ENCODE measurements at regions of chr4 and their contacts with region 1.

Region 1: GRCh38 chr4:81471588-81472288 is at the start of gene RASGEF1B:
- DNase-seq: peak; percentile 80
- H3K4me3 Mint-ChIP-seq: peak within 1 kb of the TSS; percentile 80
- H3K27ac Mint-ChIP-seq: peak within 1 kb of the TSS; percentile 73
- H3K4me1 Mint-ChIP-seq: peaks cover 27% of the 10 kb centered on the region
- H3K27me3 Mint-ChIP-seq: no peaks in the 10 kb centered on the region
- CTCF ChIP-seq: no peak
- total RNA-seq, gene RASGEF1B: 4.8 and 5.4 TPM in 2 replicates

Region 2: DNA sequence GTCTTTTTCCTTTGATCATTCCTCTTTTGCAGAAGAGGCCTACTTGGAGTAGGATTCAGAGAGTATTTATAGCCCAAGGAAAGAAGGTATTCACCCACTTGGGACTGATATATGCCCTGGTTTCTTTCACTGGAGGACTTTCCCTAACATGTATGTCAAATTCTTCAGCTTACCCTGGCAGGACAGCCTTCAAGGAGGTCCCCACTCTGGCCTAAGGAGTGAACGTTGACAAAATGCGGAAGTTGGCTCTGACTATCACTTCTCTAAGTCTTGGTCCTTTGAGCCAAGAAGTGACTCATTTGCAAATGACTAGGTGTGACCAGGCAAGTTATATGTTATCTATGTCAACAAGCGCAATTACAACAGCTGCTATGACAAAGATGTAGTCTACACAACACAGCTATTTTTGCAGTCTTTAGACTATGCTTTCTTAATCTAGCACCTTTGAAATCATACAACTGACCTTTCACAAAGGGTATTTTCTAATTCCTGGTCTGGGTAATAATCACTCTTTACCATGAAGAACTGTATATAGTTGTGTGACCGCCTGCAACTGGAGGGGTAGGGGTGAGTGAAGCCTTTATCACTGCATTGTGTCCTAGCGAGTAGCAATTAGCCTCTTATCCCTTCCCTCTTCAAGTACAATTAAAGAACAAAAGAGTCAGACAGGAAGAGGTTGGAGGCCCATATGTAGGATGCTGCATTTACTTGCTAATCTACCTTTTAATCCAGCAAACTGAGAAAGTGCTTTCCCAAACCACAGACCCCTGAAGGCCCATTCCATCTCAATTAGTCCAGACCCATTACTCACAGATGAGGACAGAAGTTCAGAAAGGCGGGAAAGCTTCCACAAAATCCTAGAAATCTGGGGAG is 50.2 kb before region 1 on chr4:
- CTCF ChIA-PET with region 1: interaction called, 12 read pairs
- POLR2A ChIA-PET with region 1: interaction called, 11 read pairs
- intact Hi-C with region 1: no loop called
- DNase-seq: peak; percentile 88
- H3K4me3 Mint-ChIP-seq: no peak overlapping the region
- H3K27ac Mint-ChIP-seq: peak overlapping the region; percentile 95
- H3K4me1 Mint-ChIP-seq: peaks cover 22% of the 10 kb centered on the region
- H3K27me3 Mint-ChIP-seq: no peaks in the 10 kb centered on the region
- CTCF ChIP-seq: no peak

Region 3: DNA sequence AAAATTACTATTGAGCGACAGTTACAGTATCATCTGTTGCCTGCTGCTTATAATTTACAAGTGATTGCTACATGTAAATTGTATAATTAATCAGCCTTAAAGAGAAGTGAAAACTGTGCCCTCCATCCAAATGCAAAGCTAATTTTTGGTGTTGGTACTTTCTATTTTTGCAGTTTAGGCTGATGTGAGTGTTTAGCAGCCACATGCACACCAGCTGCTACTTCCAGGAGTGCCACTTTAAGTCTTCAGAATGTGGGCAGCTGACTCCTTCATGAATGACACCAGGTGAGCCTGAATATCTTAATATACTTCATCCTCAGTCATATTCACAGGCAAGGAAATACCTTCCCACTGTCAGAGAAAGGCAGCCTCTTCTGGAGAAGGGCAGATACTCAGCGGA is 149.8 kb after region 1 on chr4:
- CTCF ChIA-PET with region 1: interaction called, 8 read pairs
- POLR2A ChIA-PET with region 1: interaction called, 29 read pairs
- intact Hi-C with region 1: no loop called
- DNase-seq: no peak
- H3K4me3 Mint-ChIP-seq: no peak overlapping the region
- H3K27ac Mint-ChIP-seq: no peak overlapping the region
- H3K4me1 Mint-ChIP-seq: peaks cover 11% of the 10 kb centered on the region
- H3K27me3 Mint-ChIP-seq: no peaks in the 10 kb centered on the region
- CTCF ChIP-seq: no peak

Region 4: DNA sequence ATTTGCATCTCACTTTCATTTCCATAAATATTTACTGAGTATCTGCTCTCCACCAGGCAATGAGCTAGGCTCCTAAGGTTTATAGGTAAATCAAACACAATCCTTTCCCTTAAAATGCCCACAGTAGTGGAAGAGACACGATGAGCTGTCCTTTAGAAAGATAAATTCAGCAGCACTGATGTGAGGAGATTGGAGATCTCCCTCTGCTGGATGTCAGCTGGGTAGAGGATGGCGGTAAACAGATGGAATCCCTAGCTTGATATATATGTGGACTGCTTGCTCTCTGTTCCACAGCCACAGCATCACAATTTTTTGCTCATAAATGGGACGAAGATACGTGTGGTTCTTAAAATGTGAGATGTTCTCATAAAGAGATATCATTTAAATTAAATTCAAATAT is 216.3 kb after region 1 on chr4:
- CTCF ChIA-PET with region 1: interaction called, 11 read pairs
- POLR2A ChIA-PET with region 1: no interaction called
- intact Hi-C with region 1: loop called (anchors 1 kb)
- DNase-seq: peak; percentile 7
- H3K4me3 Mint-ChIP-seq: no peak overlapping the region
- H3K27ac Mint-ChIP-seq: no peak overlapping the region
- H3K4me1 Mint-ChIP-seq: no peaks in the 10 kb centered on the region
- H3K27me3 Mint-ChIP-seq: no peaks in the 10 kb centered on the region
- CTCF ChIP-seq: no peak

Region 5: DNA sequence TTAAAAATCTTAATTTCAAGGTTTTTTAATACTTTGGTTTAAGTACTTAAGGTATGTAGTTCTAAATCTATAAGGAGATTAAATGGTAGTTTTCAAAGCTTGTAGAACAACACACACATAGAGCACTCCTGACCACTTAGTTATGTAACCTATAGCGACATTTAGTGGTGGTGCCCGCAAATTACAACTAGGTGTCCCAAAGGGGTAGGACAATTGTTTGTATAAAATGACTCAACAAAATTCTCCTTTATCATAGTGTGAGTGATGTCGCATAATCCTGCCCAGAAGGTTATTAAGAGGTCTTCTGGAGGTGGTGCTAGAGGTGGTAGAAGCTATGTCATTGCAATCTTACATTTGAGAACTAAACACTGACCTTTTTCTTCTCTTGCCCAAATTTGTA is 373.0 kb after region 1 on chr4:
- CTCF ChIA-PET with region 1: interaction called, 167 read pairs
- POLR2A ChIA-PET with region 1: interaction called, 11 read pairs
- intact Hi-C with region 1: loop called (anchors 1 kb)
- DNase-seq: peak; percentile 85
- H3K4me3 Mint-ChIP-seq: no peak overlapping the region
- H3K27ac Mint-ChIP-seq: no peak overlapping the region
- H3K4me1 Mint-ChIP-seq: peaks cover 5% of the 10 kb centered on the region
- H3K27me3 Mint-ChIP-seq: no peaks in the 10 kb centered on the region
- CTCF ChIP-seq: peak; percentile 78

Region 6: DNA sequence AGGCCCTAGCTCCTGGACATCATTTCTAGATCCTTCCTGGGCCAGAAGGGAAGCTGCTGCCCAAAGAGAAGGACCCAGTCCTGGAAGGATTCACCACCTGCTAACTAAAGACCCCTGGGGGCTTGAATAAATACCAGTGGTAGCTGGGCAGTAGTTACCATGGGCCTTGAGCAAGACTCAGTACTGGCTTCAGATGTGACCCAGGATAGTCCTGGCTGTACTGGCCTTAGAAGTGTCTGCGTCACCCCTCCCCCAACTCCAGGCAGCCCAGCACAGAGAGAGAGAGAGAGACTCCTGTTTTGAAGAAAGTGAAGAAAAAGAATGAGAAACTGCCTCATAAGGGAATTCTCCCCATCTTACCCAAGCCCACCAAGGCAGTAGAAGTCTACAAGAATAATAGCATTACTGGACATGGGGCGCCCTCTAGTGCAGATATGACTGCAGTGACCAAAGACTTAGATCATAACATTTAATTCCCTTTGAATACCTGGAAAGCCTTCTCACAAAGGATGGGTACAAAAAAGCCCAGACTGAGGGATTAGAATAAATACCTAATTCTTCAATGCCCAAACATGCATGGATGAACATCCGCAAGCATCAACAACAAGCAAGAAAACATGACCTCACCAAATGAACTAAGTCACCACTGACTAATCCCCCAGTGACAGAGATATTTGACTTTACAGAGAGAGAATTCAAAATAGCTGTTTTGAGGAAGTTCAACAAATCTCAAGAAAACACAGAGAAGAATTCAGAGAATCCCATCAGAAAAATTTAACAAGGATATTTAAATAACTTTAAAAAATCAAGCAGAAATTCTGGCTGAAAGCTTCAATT is 730.3 kb after region 1 on chr4:
- CTCF ChIA-PET with region 1: interaction called, 14 read pairs
- POLR2A ChIA-PET with region 1: no interaction called
- intact Hi-C with region 1: loop called (anchors 1 kb)
- DNase-seq: peak; percentile 69
- H3K4me3 Mint-ChIP-seq: no peak overlapping the region
- H3K27ac Mint-ChIP-seq: no peak overlapping the region
- H3K4me1 Mint-ChIP-seq: peaks cover 5% of the 10 kb centered on the region
- H3K27me3 Mint-ChIP-seq: no peaks in the 10 kb centered on the region
- CTCF ChIP-seq: peak; percentile 74

Measured in MCF 10A (cell line).